ENCODE measurements at regions of chrX and their contacts with region 1.

Region 1: GRCh38 chrX:8879750-8880149 is 78.6 kb upstream of the FAM9A start:
- DNase-seq: peak; percentile 4
- H3K4me3 ChIP-seq: no peak overlapping the region
- H3K27ac ChIP-seq: no peak overlapping the region
- H3K4me1 ChIP-seq: no peaks in the 10 kb centered on the region
- H3K27me3 ChIP-seq: no peaks in the 10 kb centered on the region
- CTCF ChIP-seq: peak; percentile 66 to 74

Region 2: GRCh38 chrX:7996414-7996813 is 883.3 kb before region 1 on chrX:
- CTCF ChIA-PET with region 1: no interaction called
- dilution Hi-C with region 1: no loop called
- in situ Hi-C with region 1: no loop called
- intact Hi-C with region 1: loop called (anchors 10 kb)
- DNase-seq: peak; percentile 19
- H3K4me3 ChIP-seq: no peak overlapping the region
- H3K27ac ChIP-seq: no peak overlapping the region
- H3K4me1 ChIP-seq: no peaks in the 10 kb centered on the region
- H3K27me3 ChIP-seq: no peaks in the 10 kb centered on the region
- CTCF ChIP-seq: peak; percentile 60 to 62

Region 3: GRCh38 chrX:9708904-9709553 is 829.3 kb after region 1 on chrX:
- CTCF ChIA-PET with region 1: no interaction called
- dilution Hi-C with region 1: no loop called
- in situ Hi-C with region 1: no loop called
- intact Hi-C with region 1: loop called (anchors 5 kb)
- DNase-seq: peak; percentile 20
- H3K4me3 ChIP-seq: no peak overlapping the region
- H3K27ac ChIP-seq: no peak overlapping the region
- H3K4me1 ChIP-seq: no peaks in the 10 kb centered on the region
- H3K27me3 ChIP-seq: no peaks in the 10 kb centered on the region
- CTCF ChIP-seq: peak; percentile 64 to 77

Measured in mammary epithelial cell (primary cell).